B cell (primary cell): ENCODE measurements at regions of chr1 and their contacts with region 1.

Region 1: DNA sequence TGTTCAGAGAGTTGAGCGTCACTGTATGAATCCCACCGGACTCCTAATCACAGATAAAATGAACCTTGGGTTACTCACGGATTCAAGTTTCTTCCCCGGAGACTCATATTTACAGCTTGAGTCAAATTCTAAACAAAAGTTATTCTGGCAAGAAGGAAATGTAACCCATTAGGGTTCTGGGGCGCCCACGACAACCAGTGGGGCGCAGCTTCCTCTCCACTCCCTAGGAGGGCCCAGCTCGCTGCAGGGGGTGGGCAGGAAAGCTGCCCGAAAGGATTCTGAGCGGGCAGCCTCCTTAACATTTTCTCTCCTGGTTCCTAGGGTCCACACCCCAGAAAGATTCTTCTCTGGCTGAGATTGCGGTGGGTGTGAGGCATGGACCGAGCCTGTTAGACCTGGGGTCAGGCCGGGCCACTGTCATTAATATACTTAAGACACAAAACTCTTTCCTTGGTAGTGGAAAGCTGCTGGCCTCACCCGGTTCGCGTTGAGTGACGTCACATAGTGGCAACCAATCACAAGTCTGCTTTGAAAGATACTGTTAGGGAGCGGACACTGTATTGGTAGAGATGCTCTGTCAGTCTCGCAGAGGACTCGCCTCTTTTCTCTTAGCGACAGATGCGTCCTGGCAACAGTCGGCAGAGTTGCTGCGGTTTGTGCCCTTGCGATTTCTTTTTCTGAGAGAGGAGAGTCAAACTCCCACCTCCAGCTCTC is 13.6 kb upstream of the MCOLN3 start:
- DNase-seq: peak; percentile 94
- ATAC-seq: peak; percentile 99
- H3K4me3 ChIP-seq: peak overlapping the region in 4 of 5 experiments; percentile 45 to 67 (median 55)
- H3K4me3 Mint-ChIP-seq: peak overlapping the region; percentile 92
- H3K27ac ChIP-seq: no peak overlapping the region
- H3K27ac Mint-ChIP-seq: peak overlapping the region; percentile 87
- H3K4me1 ChIP-seq: peaks cover 10 to 13% of the 10 kb centered on the region in 2 donors
- H3K4me1 Mint-ChIP-seq: peaks cover 18% of the 10 kb centered on the region
- H3K27me3 ChIP-seq: peaks cover 0 to 3% (median 0%) of the 10 kb centered on the region in 4 experiments
- H3K27me3 Mint-ChIP-seq: peaks cover 16% of the 10 kb centered on the region
- CTCF ChIP-seq: no peak

Region 2: DNA sequence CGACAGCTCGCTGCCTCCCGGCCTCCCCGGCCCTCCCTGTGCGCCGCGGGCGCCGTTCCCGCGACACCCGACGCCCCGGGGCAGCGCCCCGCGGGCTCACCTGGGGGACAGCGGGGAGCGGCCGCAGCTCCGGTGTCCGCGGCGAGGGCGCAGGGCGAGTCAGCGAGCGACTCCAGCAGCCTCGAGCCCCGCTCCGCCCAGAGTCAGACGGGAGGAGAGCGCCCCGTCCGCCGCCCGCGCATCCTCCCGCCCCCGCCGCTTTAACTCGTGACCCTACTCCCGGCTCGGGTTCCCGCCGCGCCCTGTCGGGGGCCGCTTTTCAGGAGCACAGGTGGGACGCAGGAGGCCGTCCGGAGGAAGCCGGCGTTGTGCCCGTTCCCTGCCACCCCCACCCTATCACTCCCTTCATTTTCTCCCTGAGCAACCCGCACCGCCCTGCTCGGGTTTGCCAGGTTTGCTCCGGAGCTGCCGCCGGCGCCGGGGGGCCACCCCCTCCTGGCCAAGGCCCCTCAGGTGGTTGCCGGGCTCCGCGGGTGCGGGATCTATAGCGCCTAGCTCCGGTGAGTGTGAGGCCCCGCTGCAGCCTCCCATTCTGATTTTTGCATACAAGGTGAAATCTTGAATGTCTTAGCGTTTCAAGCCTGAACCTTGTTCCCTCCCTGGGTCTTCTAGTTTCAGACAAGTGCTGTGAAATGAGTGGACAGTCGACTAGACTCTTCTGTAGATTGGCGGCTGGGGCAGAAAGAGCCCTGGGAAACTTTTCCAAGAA is 13.4 kb before region 1 on chr1 and contains the start of gene MCOLN3:
- CTCF ChIA-PET with region 1: no interaction called
- POLR2A ChIA-PET with region 1: no interaction called
- intact Hi-C with region 1: loop called (anchors 1 kb)
- DNase-seq: peak; percentile 64
- ATAC-seq: peak; percentile 70
- H3K4me3 ChIP-seq: peak within 1 kb of the TSS in 4 of 5 experiments; percentile 39 to 69 (median 53)
- H3K4me3 Mint-ChIP-seq: peak within 1 kb of the TSS; percentile 87
- H3K27ac ChIP-seq: no peak within 1 kb of the TSS
- H3K27ac Mint-ChIP-seq: no peak within 1 kb of the TSS
- H3K4me1 ChIP-seq: peaks cover 14 to 19% of the 10 kb centered on the region in 2 donors
- H3K4me1 Mint-ChIP-seq: peaks cover 14% of the 10 kb centered on the region
- H3K27me3 ChIP-seq: peaks cover 0 to 36% (median 35%) of the 10 kb centered on the region in 4 experiments
- H3K27me3 Mint-ChIP-seq: peaks cover 51% of the 10 kb centered on the region
- CTCF ChIP-seq: no peak
- total RNA-seq, gene MCOLN3: 0.10 TPM in 1 of 2 replicates, not detected in the other

Region 3: GRCh38 chr1:85448358-85448757 is 386.5 kb after region 1 on chr1:
- CTCF ChIA-PET with region 1: no interaction called
- POLR2A ChIA-PET with region 1: no interaction called
- intact Hi-C with region 1: no loop called
- DNase-seq: no peak
- ATAC-seq: no peak
- H3K4me3 ChIP-seq: no peak overlapping the region
- H3K4me3 Mint-ChIP-seq: no peak overlapping the region
- H3K27ac ChIP-seq: no peak overlapping the region
- H3K27ac Mint-ChIP-seq: no peak overlapping the region
- H3K4me1 ChIP-seq: no peaks in the 10 kb centered on the region
- H3K4me1 Mint-ChIP-seq: no peaks in the 10 kb centered on the region
- H3K27me3 ChIP-seq: no peaks in the 10 kb centered on the region
- H3K27me3 Mint-ChIP-seq: no peaks in the 10 kb centered on the region
- CTCF ChIP-seq: no peak